ENCODE measurements at regions of chr17 and their contacts with region 1.

Region 1: GRCh38 chr17:8162233-8162996 is at the start of gene VAMP2:
- DNase-seq: peak; percentile 81 to 86
- ATAC-seq: peak; percentile 20 to 79 (median 58)
- H3K4me3 ChIP-seq: peak within 1 kb of the TSS; percentile 80 to 100 (median 99)
- H3K27ac ChIP-seq: peak within 1 kb of the TSS; percentile 97 to 100 (median 100)
- H3K4me1 ChIP-seq: peaks cover 25 to 71% (median 57%) of the 10 kb centered on the region in 9 donors
- H3K27me3 ChIP-seq: no peaks in the 10 kb centered on the region
- CTCF ChIP-seq: peak in 1 of 9 donors; percentile 23
- total RNA-seq, gene VAMP2: 46.8 to 67.8 (median 62.7) TPM

Region 2: GRCh38 chr17:8125157-8125946 is 37.1 kb before region 1 on chr17:
- intact Hi-C with region 1: loop called in 4 of 10 experiments (anchors 5 kb)
- DNase-seq: peak; percentile 76 to 86
- ATAC-seq: peak; percentile 30 to 71 (median 60)
- H3K4me3 ChIP-seq: peak overlapping the region; percentile 40 to 91 (median 70)
- H3K27ac ChIP-seq: peak overlapping the region in 8 of 10 donors; percentile 51 to 82 (median 67)
- H3K4me1 ChIP-seq: peaks cover 27 to 70% (median 67%) of the 10 kb centered on the region in 9 donors
- H3K27me3 ChIP-seq: peaks cover 0 to 94% (median 17%) of the 10 kb centered on the region in 7 donors
- CTCF ChIP-seq: no peak

Region 3: GRCh38 chr17:8173056-8173870 is 10.8 kb after region 1 on chr17:
- intact Hi-C with region 1: loop called in 1 of 10 experiments (anchors 1 kb)
- DNase-seq: peak in 1 of 2 donors; percentile 88
- ATAC-seq: peak; percentile 84 to 92 (median 88)
- H3K4me3 ChIP-seq: peak overlapping the region in 9 of 10 donors; percentile 14 to 55 (median 44)
- H3K27ac ChIP-seq: peak overlapping the region; percentile 83 to 98 (median 94)
- H3K4me1 ChIP-seq: peaks cover 11 to 43% (median 27%) of the 10 kb centered on the region in 9 donors
- H3K27me3 ChIP-seq: no peaks in the 10 kb centered on the region
- CTCF ChIP-seq: no peak

Region 4: DNA sequence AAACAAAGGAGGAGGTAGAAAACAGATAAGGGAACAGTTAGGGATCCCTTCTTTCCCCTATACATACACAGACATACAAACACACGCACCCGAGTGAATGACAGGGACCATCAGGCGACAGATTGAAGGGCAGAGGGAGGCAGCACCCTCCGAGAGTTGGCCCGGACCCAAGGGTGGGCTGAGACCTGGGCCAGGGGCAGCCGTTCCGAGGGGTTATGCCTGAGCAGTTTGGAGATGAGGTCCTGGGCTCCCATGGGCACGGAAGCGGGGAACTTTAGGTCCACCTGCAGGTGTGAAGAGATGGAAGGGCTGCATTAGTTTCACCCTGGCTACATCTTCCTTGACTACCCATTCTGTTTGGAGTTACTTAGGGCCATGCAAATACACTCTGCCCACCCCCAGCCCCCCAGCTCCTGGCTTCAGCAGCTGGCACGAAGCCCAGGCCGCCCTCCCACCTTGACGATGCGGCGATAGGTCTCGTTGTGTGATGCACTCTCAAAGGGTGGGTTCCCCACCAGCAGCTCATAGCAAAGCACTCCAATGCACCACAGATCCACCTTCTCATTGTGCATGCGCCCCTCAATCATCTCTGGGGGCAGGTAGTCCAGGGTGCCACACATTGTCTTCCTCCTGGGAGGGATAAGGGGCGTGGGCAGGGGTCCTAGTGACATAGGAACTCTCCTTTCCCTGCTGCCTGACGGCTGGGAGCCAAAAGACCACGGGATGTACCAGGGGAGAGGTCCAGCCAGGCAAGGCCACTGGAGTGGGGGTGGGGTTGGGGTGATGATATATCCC is 42.5 kb after region 1 on chr17:
- intact Hi-C with region 1: no loop called
- DNase-seq: no peak
- ATAC-seq: no peak
- H3K4me3 ChIP-seq: no peak overlapping the region
- H3K27ac ChIP-seq: no peak overlapping the region
- H3K4me1 ChIP-seq: peaks cover under 1 to 14% (median 3%) of the 10 kb centered on the region in 9 donors
- H3K27me3 ChIP-seq: no peaks in the 10 kb centered on the region
- CTCF ChIP-seq: no peak

Measured in heart right ventricle (tissue), 16 donors.